ENCODE measurements at regions of chr20 and their contacts with region 1.

Region 1: DNA sequence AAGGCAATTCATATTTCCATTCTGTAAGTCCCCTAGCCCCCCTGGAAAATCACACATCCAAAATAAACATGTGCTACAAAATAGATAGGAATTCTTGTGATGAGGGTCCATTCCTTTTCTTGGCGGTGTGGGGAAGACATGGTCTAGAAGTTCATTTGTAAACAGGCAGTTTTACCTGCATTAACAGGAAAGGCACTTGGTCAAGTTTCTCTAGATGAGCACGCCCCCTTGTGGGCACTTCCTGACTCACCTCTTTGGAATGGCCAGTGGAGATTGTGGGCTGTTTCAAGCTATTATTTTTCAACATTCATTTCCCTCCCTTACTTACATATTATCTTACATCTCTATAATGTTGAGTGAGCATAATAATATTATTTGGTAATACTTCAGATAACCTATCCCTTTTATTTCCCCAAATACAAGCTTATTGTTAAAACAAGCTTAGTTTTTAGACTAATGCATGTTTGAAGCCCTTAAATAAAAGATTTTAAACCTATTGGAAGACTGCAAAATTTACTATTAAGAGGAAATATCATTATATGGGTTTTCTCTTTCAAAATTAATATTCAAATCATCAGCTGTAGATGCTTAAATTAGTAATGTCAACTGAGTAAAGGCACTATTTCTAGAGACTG is 92.1 kb downstream of the TASP1 start:
- DNase-seq: peak; percentile 83
- ATAC-seq: peak; percentile 94
- H3K4me3 ChIP-seq: no peak overlapping the region
- H3K27ac ChIP-seq: no peak overlapping the region
- H3K4me1 ChIP-seq: no peaks in the 10 kb centered on the region
- H3K27me3 ChIP-seq: no peaks in the 10 kb centered on the region
- CTCF ChIP-seq: peak; percentile 94
- EP300 ChIP-seq: no peak
- POLR2A ChIP-seq: no peak
- RAD21 ChIP-seq: peak; percentile 97

Region 2: DNA sequence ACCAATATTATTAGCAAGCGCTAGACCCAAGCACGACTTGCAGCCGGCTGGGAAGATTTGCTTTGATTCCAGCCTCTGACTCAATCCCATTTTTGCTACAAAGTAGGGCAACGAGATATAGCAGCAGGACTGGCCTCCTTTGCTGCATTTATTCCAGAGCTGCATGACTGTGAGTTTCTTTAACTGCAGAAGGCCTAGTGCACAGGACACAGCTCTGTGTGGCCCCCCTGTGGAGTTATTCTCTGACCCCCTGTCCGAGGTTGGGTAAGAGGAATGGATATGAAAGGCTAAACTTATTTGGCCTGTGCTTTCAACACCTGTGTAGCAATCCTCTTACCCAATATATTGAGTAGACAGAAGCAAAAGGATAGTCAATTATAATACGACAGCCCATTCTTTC is 671.1 kb before region 1 on chr20:
- CTCF ChIA-PET with region 1: no interaction called
- POLR2A ChIA-PET with region 1: no interaction called
- in situ Hi-C with region 1: no loop called
- intact Hi-C with region 1: no loop called
- DNase-seq: peak; percentile 35
- ATAC-seq: peak; percentile 82
- H3K4me3 ChIP-seq: no peak overlapping the region
- H3K27ac ChIP-seq: no peak overlapping the region
- H3K4me1 ChIP-seq: no peaks in the 10 kb centered on the region
- H3K27me3 ChIP-seq: no peaks in the 10 kb centered on the region
- CTCF ChIP-seq: no peak
- EP300 ChIP-seq: no peak
- POLR2A ChIP-seq: no peak
- RAD21 ChIP-seq: no peak

Region 3: DNA sequence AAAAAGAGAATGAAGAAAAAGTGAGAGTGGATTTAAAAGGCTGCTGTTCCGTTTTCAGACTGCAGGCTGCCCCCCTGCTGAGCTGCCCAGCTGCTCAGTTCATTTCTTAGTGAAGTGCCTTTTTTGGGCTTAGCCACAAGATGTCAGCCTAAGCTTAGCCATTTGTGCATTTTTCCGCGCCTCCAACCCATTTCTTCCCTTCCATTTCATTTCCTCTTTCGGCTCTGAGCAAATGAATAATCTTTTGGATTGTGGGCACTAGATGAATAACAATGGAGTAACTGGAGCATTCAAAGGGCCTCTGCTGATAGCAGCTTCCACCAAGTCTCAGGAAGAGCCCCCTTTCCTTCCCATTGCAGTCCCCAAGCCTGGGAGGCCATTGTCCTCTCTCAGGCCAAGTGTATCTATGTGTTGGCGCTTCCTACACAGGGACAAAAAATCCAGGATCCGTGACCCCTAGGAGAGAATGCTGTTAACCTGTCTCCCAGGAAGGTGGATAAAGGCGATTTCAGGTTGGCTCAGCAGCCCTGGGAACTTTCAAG is 621.3 kb before region 1 on chr20:
- CTCF ChIA-PET with region 1: interaction called, 10 read pairs
- POLR2A ChIA-PET with region 1: no interaction called
- in situ Hi-C with region 1: loop called (anchors 25 kb)
- intact Hi-C with region 1: loop called (anchors 1 kb)
- DNase-seq: peak; percentile 89
- ATAC-seq: peak; percentile 84
- H3K4me3 ChIP-seq: peak overlapping the region; percentile 56 to 79 (median 73)
- H3K27ac ChIP-seq: peak overlapping the region; percentile 6
- H3K4me1 ChIP-seq: peaks cover 68% of the 10 kb centered on the region
- H3K27me3 ChIP-seq: peaks cover 0 to 5% of the 10 kb centered on the region in 2 experiments; a peak in 1 of 5 replicates
- CTCF ChIP-seq: peak; percentile 99
- EP300 ChIP-seq: 0 out of 4 replicates have a peak, but pooled peaks of 1 of the 2 experiments have one; percentile 24
- POLR2A ChIP-seq: no peak
- RAD21 ChIP-seq: peak; percentile 99

Region 4: GRCh38 chr20:13261460-13262301 is 284.9 kb before region 1 on chr20:
- CTCF ChIA-PET with region 1: no interaction called
- POLR2A ChIA-PET with region 1: no interaction called
- in situ Hi-C with region 1: no loop called
- intact Hi-C with region 1: loop called (anchors 5 kb)
- DNase-seq: peak; percentile 86
- ATAC-seq: peak; percentile 99
- H3K4me3 ChIP-seq: no peak overlapping the region
- H3K27ac ChIP-seq: no peak overlapping the region
- H3K4me1 ChIP-seq: peaks cover 32% of the 10 kb centered on the region
- H3K27me3 ChIP-seq: no peaks in the 10 kb centered on the region
- CTCF ChIP-seq: peak; percentile 96
- EP300 ChIP-seq: 0 out of 4 replicates have a peak, but pooled peaks of 1 of the 2 experiments have one; percentile 39
- POLR2A ChIP-seq: no peak
- RAD21 ChIP-seq: peak; percentile 95

Region 5: GRCh38 chr20:13348311-13349234 is 198.0 kb before region 1 on chr20:
- CTCF ChIA-PET with region 1: no interaction called
- POLR2A ChIA-PET with region 1: no interaction called
- in situ Hi-C with region 1: no loop called
- intact Hi-C with region 1: no loop called
- DNase-seq: no peak
- ATAC-seq: no peak
- H3K4me3 ChIP-seq: no peak overlapping the region
- H3K27ac ChIP-seq: no peak overlapping the region
- H3K4me1 ChIP-seq: peaks cover 19% of the 10 kb centered on the region
- H3K27me3 ChIP-seq: no peaks in the 10 kb centered on the region
- CTCF ChIP-seq: no peak
- EP300 ChIP-seq: no peak
- POLR2A ChIP-seq: no peak
- RAD21 ChIP-seq: no peak

Region 6: GRCh38 chr20:13384132-13384531 is 162.5 kb before region 1 on chr20:
- CTCF ChIA-PET with region 1: no interaction called
- POLR2A ChIA-PET with region 1: no interaction called
- in situ Hi-C with region 1: no loop called
- intact Hi-C with region 1: loop called (anchors 1 kb)
- DNase-seq: no peak
- ATAC-seq: no peak
- H3K4me3 ChIP-seq: no peak overlapping the region
- H3K27ac ChIP-seq: no peak overlapping the region
- H3K4me1 ChIP-seq: peaks cover 23% of the 10 kb centered on the region
- H3K27me3 ChIP-seq: no peaks in the 10 kb centered on the region
- CTCF ChIP-seq: no peak
- EP300 ChIP-seq: no peak
- POLR2A ChIP-seq: no peak
- RAD21 ChIP-seq: no peak

Region 7: GRCh38 chr20:13458860-13459451 is 87.7 kb before region 1 on chr20:
- CTCF ChIA-PET with region 1: interaction called, 8 read pairs
- POLR2A ChIA-PET with region 1: no interaction called
- in situ Hi-C with region 1: no loop called
- intact Hi-C with region 1: loop called (anchors 1 kb)
- DNase-seq: peak; percentile 61
- ATAC-seq: peak; percentile 89
- H3K4me3 ChIP-seq: no peak overlapping the region
- H3K27ac ChIP-seq: no peak overlapping the region
- H3K4me1 ChIP-seq: peaks cover 19% of the 10 kb centered on the region
- H3K27me3 ChIP-seq: no peaks in the 10 kb centered on the region
- CTCF ChIP-seq: peak; percentile 76
- EP300 ChIP-seq: no peak
- POLR2A ChIP-seq: no peak
- RAD21 ChIP-seq: peak; percentile 65

Region 8: DNA sequence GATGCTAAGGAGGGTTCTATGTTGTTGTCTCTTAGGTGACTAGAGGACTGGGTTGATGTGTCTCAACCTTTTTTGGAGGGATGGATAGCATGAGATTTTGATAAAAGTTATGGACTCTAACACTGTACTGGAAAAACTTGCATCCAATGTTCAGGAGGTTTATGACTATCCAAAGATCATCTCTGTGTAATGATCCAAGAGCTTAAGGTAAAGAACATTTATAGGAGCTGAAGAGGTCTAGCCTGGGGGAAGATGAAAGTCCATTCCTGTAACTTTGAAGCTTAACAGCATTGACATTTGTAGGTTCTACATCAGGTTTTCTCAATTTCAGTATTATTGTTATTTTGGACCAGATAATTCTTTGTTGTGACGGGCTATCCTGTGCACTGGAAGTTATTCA is 189.2 kb after region 1 on chr20:
- CTCF ChIA-PET with region 1: no interaction called
- POLR2A ChIA-PET with region 1: no interaction called
- in situ Hi-C with region 1: no loop called
- intact Hi-C with region 1: no loop called
- DNase-seq: no peak
- ATAC-seq: no peak
- H3K4me3 ChIP-seq: no peak overlapping the region
- H3K27ac ChIP-seq: no peak overlapping the region
- H3K4me1 ChIP-seq: 0 out of 2 replicates have a peak, but pooled peaks cover 6% of the 10 kb centered on the region
- H3K27me3 ChIP-seq: no peaks in the 10 kb centered on the region
- CTCF ChIP-seq: no peak
- EP300 ChIP-seq: no peak
- POLR2A ChIP-seq: no peak
- RAD21 ChIP-seq: no peak

Measured in HepG2 (cell line).